Panc1 (cell line): ENCODE measurements at regions of chr13 and their contacts with region 1.

Region 1: DNA sequence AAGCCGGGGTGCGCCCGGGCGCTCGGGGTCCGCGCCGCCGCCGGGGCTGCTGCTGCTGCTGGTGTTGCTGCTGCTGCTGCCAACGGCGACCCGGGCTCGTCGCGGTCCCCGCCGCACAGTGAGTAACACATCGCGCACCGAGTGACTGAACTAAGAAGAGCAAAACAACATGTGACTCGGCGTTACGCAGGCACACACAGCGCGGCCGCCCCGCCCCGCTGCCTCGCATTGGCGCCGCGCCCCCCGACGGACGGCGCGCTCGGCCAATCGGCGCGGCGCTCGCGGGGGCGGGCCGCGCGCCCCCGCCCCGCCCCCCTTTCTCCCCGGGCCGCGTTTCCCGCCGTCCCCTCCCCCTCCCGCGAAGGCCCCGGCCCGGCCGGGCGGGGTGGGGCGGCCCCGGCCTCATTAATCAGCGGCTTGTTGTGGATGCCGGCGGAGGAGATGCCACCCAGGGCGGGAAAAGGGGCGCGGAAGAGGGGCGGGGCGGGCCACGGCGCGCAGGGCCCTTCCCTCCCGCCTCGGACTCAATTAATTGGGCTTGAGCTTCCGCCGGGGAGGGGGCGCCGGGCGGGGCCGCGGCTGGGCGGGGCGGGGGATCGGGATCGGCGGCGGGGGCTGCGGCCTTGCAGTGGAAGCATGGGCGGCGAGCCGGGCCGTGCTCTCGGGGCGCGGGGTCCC is at the start of gene IRS2:
- DNase-seq: no peak
- ATAC-seq: peak; percentile 87
- H3K4me3 ChIP-seq: peak within 1 kb of the TSS; percentile 61 to 66
- H3K27ac ChIP-seq: peak within 1 kb of the TSS; percentile 44; the same call in 1 of the 2 replicates
- H3K4me1 ChIP-seq: no peaks in the 10 kb centered on the region; the same call in 1 of the 2 replicates
- H3K27me3 ChIP-seq: no peaks in the 10 kb centered on the region
- CTCF ChIP-seq: no peak
- total RNA-seq, gene IRS2: 5.9 TPM

Region 2: GRCh38 chr13:108961542-108962125 is 825.0 kb before region 1 on chr13:
- CTCF ChIA-PET with region 1: no interaction called
- POLR2A ChIA-PET with region 1: no interaction called
- in situ Hi-C with region 1: no loop called
- intact Hi-C with region 1: loop called (anchors 5 kb)
- DNase-seq: peak; percentile 46
- ATAC-seq: peak; percentile 82
- H3K4me3 ChIP-seq: no peak overlapping the region
- H3K27ac ChIP-seq: no peak overlapping the region
- H3K4me1 ChIP-seq: no peaks in the 10 kb centered on the region
- H3K27me3 ChIP-seq: no peaks in the 10 kb centered on the region
- CTCF ChIP-seq: peak; percentile 63

Region 3: DNA sequence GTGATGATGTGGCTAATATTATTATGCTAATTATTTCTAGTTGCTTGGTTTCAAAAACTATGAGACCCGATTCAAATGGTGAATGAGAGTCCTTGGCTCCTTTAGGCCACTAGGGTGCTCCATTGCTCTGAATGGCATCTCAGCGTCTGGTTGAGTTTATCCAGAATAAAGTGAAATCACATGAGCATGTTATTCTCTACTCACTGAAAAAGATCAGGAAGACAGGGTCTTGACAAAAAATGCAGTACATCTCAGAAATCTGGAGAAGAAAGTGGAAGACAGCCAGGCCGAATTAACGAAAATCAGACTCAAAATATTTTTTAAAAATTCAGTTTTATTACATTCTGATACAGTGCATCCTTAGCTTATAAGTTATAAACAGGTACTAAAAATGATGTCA is 641.0 kb before region 1 on chr13:
- CTCF ChIA-PET with region 1: no interaction called
- POLR2A ChIA-PET with region 1: no interaction called
- in situ Hi-C with region 1: no loop called
- intact Hi-C with region 1: loop called (anchors 5 kb)
- DNase-seq: peak; percentile 46
- ATAC-seq: peak; percentile 78
- H3K4me3 ChIP-seq: no peak overlapping the region
- H3K27ac ChIP-seq: peak overlapping the region; percentile 91
- H3K4me1 ChIP-seq: peaks cover 32% of the 10 kb centered on the region
- H3K27me3 ChIP-seq: no peaks in the 10 kb centered on the region
- CTCF ChIP-seq: peak; percentile 75

Region 4: DNA sequence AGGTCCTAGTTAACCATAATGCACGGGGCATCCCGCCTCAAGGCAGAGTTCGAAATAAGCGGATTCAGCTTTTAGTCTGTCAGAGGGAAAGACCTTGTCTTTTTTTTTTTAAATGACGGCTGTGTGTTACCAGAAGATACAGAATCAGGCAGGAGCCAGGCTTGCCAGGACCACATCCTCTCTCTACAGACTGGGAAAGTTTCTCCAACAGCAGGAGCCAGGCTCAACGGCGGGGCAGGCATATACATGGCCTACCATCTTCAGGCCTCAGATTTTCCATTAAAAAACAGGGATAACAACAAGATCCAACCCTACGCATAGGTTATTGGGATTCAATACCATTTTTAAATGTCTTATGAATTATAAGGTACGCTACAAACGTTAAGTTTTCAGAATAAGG is 18.0 kb before region 1 on chr13:
- CTCF ChIA-PET with region 1: no interaction called
- POLR2A ChIA-PET with region 1: no interaction called
- in situ Hi-C with region 1: no loop called
- intact Hi-C with region 1: no loop called
- DNase-seq: no peak
- ATAC-seq: no peak
- H3K4me3 ChIP-seq: no peak overlapping the region
- H3K27ac ChIP-seq: no peak overlapping the region
- H3K4me1 ChIP-seq: no peaks in the 10 kb centered on the region
- H3K27me3 ChIP-seq: no peaks in the 10 kb centered on the region
- CTCF ChIP-seq: no peak

Region 5: GRCh38 chr13:110103534-110103933 is 316.9 kb after region 1 on chr13:
- CTCF ChIA-PET with region 1: no interaction called
- POLR2A ChIA-PET with region 1: no interaction called
- in situ Hi-C with region 1: no loop called
- intact Hi-C with region 1: loop called (anchors 5 kb)
- DNase-seq: no peak
- ATAC-seq: no peak
- H3K4me3 ChIP-seq: no peak overlapping the region
- H3K27ac ChIP-seq: no peak overlapping the region
- H3K4me1 ChIP-seq: no peaks in the 10 kb centered on the region
- H3K27me3 ChIP-seq: no peaks in the 10 kb centered on the region
- CTCF ChIP-seq: no peak